Activated T-helper 2 cell treated with anti-CD3 and anti-CD28 coated beads, Interferon-gamma antibody, Interleukin-2, Interleukin-4, amounts not matched to agents 10 μg/mL and 5 μg/mL and 100 μg/mL, durations not matched to agents 14 hours and 24 hours and 36 hours (primary cell): ENCODE measurements at regions of chr7 and their contacts with region 1.

Region 1: DNA sequence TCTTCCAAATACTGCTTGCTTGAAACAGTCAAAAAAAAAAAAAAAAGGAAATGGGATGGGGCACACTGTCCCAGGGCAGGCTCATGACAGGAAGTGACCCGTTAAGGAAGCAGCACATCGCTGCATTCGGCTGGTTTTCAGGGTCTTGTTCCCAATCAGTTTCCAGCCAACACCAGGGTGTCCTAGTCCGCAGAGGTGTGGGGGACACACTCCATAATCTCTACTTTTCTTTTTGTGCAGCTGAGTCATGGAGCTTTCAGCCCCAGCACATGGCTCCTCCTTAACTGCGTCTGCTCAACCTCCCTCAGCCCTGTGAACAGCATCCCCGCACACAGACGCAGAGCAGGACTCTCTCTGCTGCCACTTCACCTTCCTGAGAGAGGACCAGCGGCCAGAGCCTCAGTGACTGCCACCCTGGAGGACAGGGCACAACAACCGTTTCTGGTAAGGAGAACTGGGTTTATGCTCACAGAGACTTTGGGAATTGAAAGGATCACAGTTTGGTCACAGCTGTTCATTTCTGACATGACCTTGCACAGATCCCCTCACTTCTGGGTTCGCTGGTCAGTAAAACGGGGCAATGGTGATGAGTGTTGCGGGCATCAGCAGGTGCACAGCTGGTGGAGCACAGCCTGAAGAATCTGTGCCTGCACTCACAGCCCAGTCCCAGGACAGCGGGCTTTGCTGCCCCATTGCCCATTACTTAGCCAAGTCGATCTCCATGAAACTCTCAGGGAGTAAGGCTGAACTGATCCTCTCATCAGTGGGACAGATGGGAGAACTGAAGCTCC is at the start of gene GIMAP5:
- DNase-seq: peak; percentile 44
- H3K4me3 Mint-ChIP-seq: peak within 1 kb of the TSS; percentile 91
- H3K27ac Mint-ChIP-seq: peak within 1 kb of the TSS; percentile 91
- H3K4me1 Mint-ChIP-seq: peaks cover 78% of the 10 kb centered on the region
- H3K27me3 Mint-ChIP-seq: no peaks in the 10 kb centered on the region
- total RNA-seq, gene GIMAP5: 42.9 and 46.7 TPM in 2 replicates

Region 2: GRCh38 chr7:150311711-150312110 is 425.7 kb before region 1 on chr7:
- intact Hi-C with region 1: no loop called
- DNase-seq: no peak
- H3K4me3 Mint-ChIP-seq: no peak overlapping the region
- H3K27ac Mint-ChIP-seq: no peak overlapping the region
- H3K4me1 Mint-ChIP-seq: peaks cover 4% of the 10 kb centered on the region
- H3K27me3 Mint-ChIP-seq: no peaks in the 10 kb centered on the region

Region 3: GRCh38 chr7:150322833-150323681 is 414.4 kb before region 1 on chr7 and contains the starts of genes ACTR3C and LRRC61:
- intact Hi-C with region 1: loop called (anchors 5 kb)
- DNase-seq: peak; percentile 57
- H3K4me3 Mint-ChIP-seq: peak within 1 kb of the TSS; percentile 97
- H3K27ac Mint-ChIP-seq: peak within 1 kb of the TSS; percentile 99
- H3K4me1 Mint-ChIP-seq: peaks cover 47% of the 10 kb centered on the region
- H3K27me3 Mint-ChIP-seq: no peaks in the 10 kb centered on the region
- total RNA-seq, gene ACTR3C: 7.0 and 7.9 TPM in 2 replicates
- total RNA-seq, gene LRRC61: 22.7 and 25.8 TPM in 2 replicates

Region 4: DNA sequence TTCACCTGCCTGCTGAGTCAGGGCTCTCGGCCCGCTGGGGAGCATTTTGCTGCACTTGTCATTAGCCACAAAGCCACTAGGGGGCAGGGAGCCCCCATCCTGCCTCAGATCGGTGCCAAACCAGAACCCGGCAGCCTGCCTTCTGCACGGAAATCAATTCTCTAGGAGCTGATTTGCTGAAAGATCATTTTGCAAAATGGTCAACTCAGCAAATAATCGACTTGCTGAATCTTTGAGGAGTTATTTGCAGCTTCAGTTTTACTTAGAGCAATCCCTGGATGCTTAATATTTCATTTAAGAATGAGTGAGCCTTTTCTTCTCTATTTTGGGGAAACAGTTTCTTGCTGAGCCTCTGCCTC is 288.7 kb before region 1 on chr7:
- intact Hi-C with region 1: loop called (anchors 1 kb)
- DNase-seq: peak; percentile 81
- H3K4me3 Mint-ChIP-seq: peak overlapping the region; percentile 54
- H3K27ac Mint-ChIP-seq: peak overlapping the region; percentile 78
- H3K4me1 Mint-ChIP-seq: peaks cover 53% of the 10 kb centered on the region
- H3K27me3 Mint-ChIP-seq: no peaks in the 10 kb centered on the region

Region 5: GRCh38 chr7:150567169-150567568 is 170.3 kb before region 1 on chr7 and contains the start of gene GIMAP4:
- intact Hi-C with region 1: loop called (anchors 2 kb)
- DNase-seq: no peak
- H3K4me3 Mint-ChIP-seq: peak within 1 kb of the TSS; percentile 89
- H3K27ac Mint-ChIP-seq: peak within 1 kb of the TSS; percentile 97
- H3K4me1 Mint-ChIP-seq: peaks cover 52% of the 10 kb centered on the region
- H3K27me3 Mint-ChIP-seq: no peaks in the 10 kb centered on the region
- total RNA-seq, gene GIMAP4: 36.7 and 39.1 TPM in 2 replicates

Region 6: GRCh38 chr7:150648353-150649079 is 88.9 kb before region 1 on chr7:
- intact Hi-C with region 1: no loop called
- DNase-seq: no peak
- H3K4me3 Mint-ChIP-seq: no peak overlapping the region
- H3K27ac Mint-ChIP-seq: no peak overlapping the region
- H3K4me1 Mint-ChIP-seq: peaks cover 20% of the 10 kb centered on the region
- H3K27me3 Mint-ChIP-seq: no peaks in the 10 kb centered on the region

Region 7: GRCh38 chr7:150685219-150686029 is 52.0 kb before region 1 on chr7 and contains the start of gene GIMAP2:
- intact Hi-C with region 1: loop called (anchors 5 kb)
- DNase-seq: no peak
- H3K4me3 Mint-ChIP-seq: peak within 1 kb of the TSS; percentile 99
- H3K27ac Mint-ChIP-seq: peak within 1 kb of the TSS; percentile 99
- H3K4me1 Mint-ChIP-seq: peaks cover 53% of the 10 kb centered on the region
- H3K27me3 Mint-ChIP-seq: no peaks in the 10 kb centered on the region
- total RNA-seq, gene GIMAP2: 29.3 and 30.5 TPM in 2 replicates

Region 8: GRCh38 chr7:150787321-150788281 is 50.1 kb after region 1 on chr7:
- intact Hi-C with region 1: no loop called
- DNase-seq: no peak
- H3K4me3 Mint-ChIP-seq: no peak overlapping the region
- H3K27ac Mint-ChIP-seq: no peak overlapping the region
- H3K4me1 Mint-ChIP-seq: peaks cover 2% of the 10 kb centered on the region
- H3K27me3 Mint-ChIP-seq: peaks cover 8% of the 10 kb centered on the region